CD4-positive, alpha-beta T cell (primary cell): ENCODE measurements at regions of chr17 and their contacts with region 1.

Region 1: GRCh38 chr17:7336240-7337175 is at the start of gene ACAP1:
- DNase-seq: peak; percentile 75 to 95 (median 90)
- ATAC-seq: peak; percentile 96
- H3K4me3 ChIP-seq: peak within 1 kb of the TSS; percentile 91
- H3K4me3 Mint-ChIP-seq: peak within 1 kb of the TSS; percentile 89
- H3K27ac ChIP-seq: peak within 1 kb of the TSS; percentile 55 to 64
- H3K27ac Mint-ChIP-seq: peak within 1 kb of the TSS; percentile 91
- H3K4me1 ChIP-seq: peaks cover 88% of the 10 kb centered on the region
- H3K4me1 Mint-ChIP-seq: peaks cover 52% of the 10 kb centered on the region
- H3K27me3 ChIP-seq: no peaks in the 10 kb centered on the region
- H3K27me3 Mint-ChIP-seq: no peaks in the 10 kb centered on the region
- CTCF ChIP-seq: no peak
- total RNA-seq, gene ACAP1: 565 to 575 TPM

Region 2: DNA sequence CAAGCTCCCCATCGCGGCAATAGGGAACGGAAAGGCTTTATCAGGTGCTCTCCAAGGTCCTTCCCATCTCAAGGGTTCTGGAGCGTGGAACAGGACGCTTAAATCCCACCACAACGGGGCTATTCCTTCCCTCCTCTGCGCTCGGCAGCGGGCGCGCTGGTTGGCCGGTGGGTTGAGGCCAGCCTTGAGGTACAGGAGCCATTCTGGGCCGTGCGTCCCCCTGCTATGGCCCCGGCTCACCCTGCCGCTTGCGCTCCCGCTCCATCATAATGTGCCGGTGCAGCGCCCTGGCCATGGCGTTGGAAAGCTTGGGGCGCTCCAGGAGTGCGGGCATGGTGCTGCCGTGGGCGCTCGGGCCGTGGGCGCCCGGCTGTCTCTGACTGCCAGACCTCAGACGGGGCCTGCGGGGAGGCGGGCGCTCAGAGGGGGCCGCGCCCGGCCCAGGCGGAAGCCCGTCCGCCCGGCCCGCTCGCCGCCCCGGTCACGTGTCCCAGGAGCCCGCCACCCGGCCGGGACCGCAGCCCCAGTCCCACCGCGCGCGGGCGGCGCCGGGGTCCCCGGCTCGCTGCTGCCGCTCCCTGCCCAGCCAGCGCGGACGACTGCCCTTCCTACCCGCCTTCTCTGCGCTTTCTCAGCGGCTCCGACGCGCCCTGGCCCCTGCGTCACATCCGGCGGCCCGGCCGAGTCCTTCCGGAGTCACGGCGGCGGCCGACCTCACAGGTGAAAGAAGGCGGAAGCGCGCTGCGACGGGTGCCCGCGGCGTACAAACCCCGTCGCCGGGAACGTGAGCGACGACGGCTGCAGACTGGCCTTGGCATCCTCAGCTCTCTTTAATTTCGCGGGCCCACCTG is 21.6 kb before region 1 on chr17 and contains the start of gene GPS2:
- CTCF ChIA-PET with region 1: interaction called, 7 read pairs
- POLR2A ChIA-PET with region 1: interaction called, 52 read pairs
- intact Hi-C with region 1: no loop called
- DNase-seq: peak; percentile 88 to 97 (median 94)
- ATAC-seq: peak; percentile 79
- H3K4me3 ChIP-seq: peak within 1 kb of the TSS; percentile 86
- H3K4me3 Mint-ChIP-seq: peak within 1 kb of the TSS; percentile 97
- H3K27ac ChIP-seq: peak within 1 kb of the TSS; percentile 82 to 92
- H3K27ac Mint-ChIP-seq: peak within 1 kb of the TSS; percentile 95
- H3K4me1 ChIP-seq: peaks cover 58% of the 10 kb centered on the region
- H3K4me1 Mint-ChIP-seq: peaks cover 59% of the 10 kb centered on the region
- H3K27me3 ChIP-seq: no peaks in the 10 kb centered on the region
- H3K27me3 Mint-ChIP-seq: no peaks in the 10 kb centered on the region
- CTCF ChIP-seq: no peak
- total RNA-seq, gene GPS2: 122 to 140 TPM

Region 3: GRCh38 chr17:7323731-7324437 is 12.6 kb before region 1 on chr17:
- CTCF ChIA-PET with region 1: interaction called, 12 read pairs
- POLR2A ChIA-PET with region 1: interaction called, 14 read pairs
- intact Hi-C with region 1: no loop called
- DNase-seq: peak; percentile 45 to 79 (median 64)
- ATAC-seq: peak; percentile 52
- H3K4me3 ChIP-seq: no peak overlapping the region
- H3K4me3 Mint-ChIP-seq: peak overlapping the region; percentile 42
- H3K27ac ChIP-seq: no peak overlapping the region
- H3K27ac Mint-ChIP-seq: no peak overlapping the region
- H3K4me1 ChIP-seq: peaks cover 27% of the 10 kb centered on the region
- H3K4me1 Mint-ChIP-seq: peaks cover 16% of the 10 kb centered on the region
- H3K27me3 ChIP-seq: no peaks in the 10 kb centered on the region
- H3K27me3 Mint-ChIP-seq: no peaks in the 10 kb centered on the region
- CTCF ChIP-seq: peak; percentile 88

Region 4: DNA sequence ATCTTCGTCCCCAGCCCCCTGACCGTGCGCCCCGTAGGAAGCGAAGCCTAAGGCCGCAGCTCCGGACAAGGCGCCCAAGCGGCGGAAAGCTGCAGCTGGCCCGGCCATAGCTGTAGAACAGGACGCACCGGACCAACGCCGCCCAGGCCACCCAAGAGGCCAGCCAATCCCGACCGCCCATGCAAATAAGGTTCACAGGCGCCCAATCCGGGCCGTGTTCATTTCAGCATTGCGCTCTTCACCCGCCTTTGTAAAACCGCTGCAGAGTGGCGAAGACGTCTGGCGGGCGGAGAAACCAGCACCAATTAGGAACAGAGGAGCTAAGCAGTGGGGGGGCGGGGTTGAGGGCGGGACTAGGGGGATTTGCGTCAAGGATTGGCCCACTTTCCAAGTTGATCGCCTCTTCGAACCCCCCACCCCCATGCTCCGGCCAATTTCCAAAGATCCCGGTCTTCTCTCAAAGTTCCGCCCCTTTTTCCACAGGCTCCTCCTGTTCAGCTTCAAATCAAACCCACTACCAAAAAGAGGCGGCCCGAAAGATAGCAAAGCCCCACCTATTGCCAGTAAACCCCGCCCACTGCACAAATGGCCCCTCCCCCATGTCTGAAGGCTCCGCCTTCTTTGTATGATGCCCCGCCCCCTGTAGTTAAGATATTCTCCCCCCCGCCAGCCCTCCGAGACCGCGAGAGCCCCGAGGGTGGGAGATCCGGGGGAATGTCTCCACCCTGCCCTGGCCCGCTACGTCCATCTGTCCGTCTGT is 67.6 kb after region 1 on chr17 and contains the start of gene TMEM256:
- CTCF ChIA-PET with region 1: no interaction called
- POLR2A ChIA-PET with region 1: interaction called, 18 read pairs
- intact Hi-C with region 1: no loop called
- DNase-seq: peak; percentile 90 to 99 (median 94)
- ATAC-seq: peak; percentile 88
- H3K4me3 ChIP-seq: peak within 1 kb of the TSS; percentile 77
- H3K4me3 Mint-ChIP-seq: peak within 1 kb of the TSS; percentile 98
- H3K27ac ChIP-seq: peak within 1 kb of the TSS in 1 of 2 donors; percentile 82
- H3K27ac Mint-ChIP-seq: peak within 1 kb of the TSS; percentile 87
- H3K4me1 ChIP-seq: peaks cover 36% of the 10 kb centered on the region
- H3K4me1 Mint-ChIP-seq: peaks cover 31% of the 10 kb centered on the region
- H3K27me3 ChIP-seq: peaks cover 0 to 5% of the 10 kb centered on the region in 2 experiments
- H3K27me3 Mint-ChIP-seq: no peaks in the 10 kb centered on the region
- CTCF ChIP-seq: no peak
- total RNA-seq, gene TMEM256: 29.0 to 29.4 TPM